CD8-positive, alpha-beta T cell (primary cell): ENCODE measurements at regions of chr9 and their contacts with region 1.

Region 1: DNA sequence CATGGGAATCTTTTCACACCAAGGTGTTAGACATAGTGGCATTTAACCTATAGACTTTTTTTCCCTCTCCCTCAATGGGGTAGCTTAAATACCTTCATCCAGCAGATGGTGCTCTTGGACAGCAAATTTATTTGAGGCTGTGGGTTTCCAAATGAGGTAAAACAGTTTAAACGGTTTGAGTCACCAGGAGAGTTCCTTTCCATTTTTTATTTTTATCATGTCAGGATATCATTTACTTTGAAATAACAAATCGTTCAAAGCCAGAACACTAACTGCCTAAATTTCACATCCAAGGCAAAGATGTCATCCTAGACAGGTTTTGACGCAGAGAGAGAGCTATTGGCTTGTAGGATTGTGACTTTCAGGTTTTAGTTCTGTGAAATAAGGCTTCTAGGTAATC is 69.7 kb downstream of the KDM4C start:
- DNase-seq: peak in 3 of 9 experiments; percentile 28 to 58 (median 40)
- ATAC-seq: peak; percentile 34
- H3K4me3 ChIP-seq: no peak overlapping the region
- H3K4me3 Mint-ChIP-seq: no peak overlapping the region
- H3K27ac ChIP-seq: no peak overlapping the region
- H3K27ac Mint-ChIP-seq: peak overlapping the region; percentile 6
- H3K4me1 ChIP-seq: no peaks in the 10 kb centered on the region
- H3K4me1 Mint-ChIP-seq: peaks cover 10% of the 10 kb centered on the region
- H3K27me3 ChIP-seq: no peaks in the 10 kb centered on the region
- H3K27me3 Mint-ChIP-seq: no peaks in the 10 kb centered on the region
- CTCF ChIP-seq: peak; percentile 59

Region 2: GRCh38 chr9:6199596-6199995 is 627.8 kb before region 1 on chr9:
- CTCF ChIA-PET with region 1: no interaction called
- POLR2A ChIA-PET with region 1: no interaction called
- intact Hi-C with region 1: no loop called
- DNase-seq: no peak
- ATAC-seq: no peak
- H3K4me3 ChIP-seq: no peak overlapping the region
- H3K4me3 Mint-ChIP-seq: no peak overlapping the region
- H3K27ac ChIP-seq: no peak overlapping the region
- H3K27ac Mint-ChIP-seq: no peak overlapping the region
- H3K4me1 ChIP-seq: no peaks in the 10 kb centered on the region
- H3K4me1 Mint-ChIP-seq: no peaks in the 10 kb centered on the region
- H3K27me3 ChIP-seq: no peaks in the 10 kb centered on the region
- H3K27me3 Mint-ChIP-seq: peaks cover 25% of the 10 kb centered on the region
- CTCF ChIP-seq: no peak

Region 3: GRCh38 chr9:7536310-7536939 is 709.0 kb after region 1 on chr9:
- CTCF ChIA-PET with region 1: no interaction called
- POLR2A ChIA-PET with region 1: no interaction called
- intact Hi-C with region 1: loop called in 1 of 2 experiments (anchors 10 kb)
- DNase-seq: peak in 4 of 9 experiments; percentile 11 to 43 (median 17)
- ATAC-seq: no peak
- H3K4me3 ChIP-seq: no peak overlapping the region
- H3K4me3 Mint-ChIP-seq: no peak overlapping the region
- H3K27ac ChIP-seq: no peak overlapping the region
- H3K27ac Mint-ChIP-seq: no peak overlapping the region
- H3K4me1 ChIP-seq: no peaks in the 10 kb centered on the region
- H3K4me1 Mint-ChIP-seq: no peaks in the 10 kb centered on the region
- H3K27me3 ChIP-seq: no peaks in the 10 kb centered on the region
- H3K27me3 Mint-ChIP-seq: peaks cover 13% of the 10 kb centered on the region
- CTCF ChIP-seq: no peak

Region 4: GRCh38 chr9:7921545-7922197 is 1094.2 kb after region 1 on chr9:
- CTCF ChIA-PET with region 1: no interaction called
- POLR2A ChIA-PET with region 1: no interaction called
- intact Hi-C with region 1: no loop called
- DNase-seq: no peak
- ATAC-seq: no peak
- H3K4me3 ChIP-seq: no peak overlapping the region
- H3K4me3 Mint-ChIP-seq: no peak overlapping the region
- H3K27ac ChIP-seq: no peak overlapping the region
- H3K27ac Mint-ChIP-seq: no peak overlapping the region
- H3K4me1 ChIP-seq: no peaks in the 10 kb centered on the region
- H3K4me1 Mint-ChIP-seq: no peaks in the 10 kb centered on the region
- H3K27me3 ChIP-seq: no peaks in the 10 kb centered on the region
- H3K27me3 Mint-ChIP-seq: no peaks in the 10 kb centered on the region
- CTCF ChIP-seq: no peak